Dendritic cell treated with granulocyte-macrophage colony-stimulating factor and Interleukin-4, amounts not matched to agents 40 ng/mL and 50 ng/mL, for 4 days (primary cell): ENCODE measurements at regions of chr3 and their contacts with region 1.

Region 1: DNA sequence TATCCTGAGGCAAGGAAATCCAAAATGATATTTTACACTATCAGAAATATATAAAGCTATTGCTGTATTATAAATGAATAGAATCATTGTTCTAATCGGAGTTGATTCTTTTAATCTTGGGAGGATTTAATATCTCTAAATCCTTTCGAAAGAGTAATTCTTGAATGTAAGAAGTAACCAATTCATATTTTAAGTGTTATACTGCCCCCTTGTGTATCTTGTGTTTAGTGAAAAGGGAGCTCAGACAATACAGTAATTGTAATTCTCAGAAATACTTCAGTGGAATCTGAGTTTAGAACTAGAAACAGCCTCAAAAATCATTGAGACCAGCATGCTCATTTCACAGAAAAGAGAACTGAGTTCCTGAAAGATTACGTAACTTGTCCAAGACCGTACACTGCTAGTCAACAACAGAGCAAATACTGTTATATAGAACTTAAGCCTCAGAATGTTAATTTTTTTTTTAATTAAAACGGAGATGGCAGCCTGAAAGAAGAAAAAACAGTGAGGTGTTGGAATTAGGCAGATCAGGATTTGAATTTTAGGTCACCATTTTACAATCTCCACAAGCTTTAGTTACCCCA is 42.9 kb downstream of the PLCH1 start:
- H3K4me3 Mint-ChIP-seq: no peak overlapping the region
- H3K27ac Mint-ChIP-seq: no peak overlapping the region
- H3K4me1 Mint-ChIP-seq: peaks cover 10% of the 10 kb centered on the region
- H3K27me3 Mint-ChIP-seq: no peaks in the 10 kb centered on the region

Region 2: GRCh38 chr3:154334973-154335420 is 1367.0 kb before region 1 on chr3:
- intact Hi-C with region 1: loop called (anchors 2 kb)
- H3K4me3 Mint-ChIP-seq: no peak overlapping the region
- H3K27ac Mint-ChIP-seq: no peak overlapping the region
- H3K4me1 Mint-ChIP-seq: no peaks in the 10 kb centered on the region
- H3K27me3 Mint-ChIP-seq: peaks cover 3% of the 10 kb centered on the region

Region 3: GRCh38 chr3:154758109-154758868 is 943.7 kb before region 1 on chr3:
- intact Hi-C with region 1: loop called (anchors 2 kb)
- H3K4me3 Mint-ChIP-seq: no peak overlapping the region
- H3K27ac Mint-ChIP-seq: no peak overlapping the region
- H3K4me1 Mint-ChIP-seq: no peaks in the 10 kb centered on the region
- H3K27me3 Mint-ChIP-seq: no peaks in the 10 kb centered on the region

Region 4: DNA sequence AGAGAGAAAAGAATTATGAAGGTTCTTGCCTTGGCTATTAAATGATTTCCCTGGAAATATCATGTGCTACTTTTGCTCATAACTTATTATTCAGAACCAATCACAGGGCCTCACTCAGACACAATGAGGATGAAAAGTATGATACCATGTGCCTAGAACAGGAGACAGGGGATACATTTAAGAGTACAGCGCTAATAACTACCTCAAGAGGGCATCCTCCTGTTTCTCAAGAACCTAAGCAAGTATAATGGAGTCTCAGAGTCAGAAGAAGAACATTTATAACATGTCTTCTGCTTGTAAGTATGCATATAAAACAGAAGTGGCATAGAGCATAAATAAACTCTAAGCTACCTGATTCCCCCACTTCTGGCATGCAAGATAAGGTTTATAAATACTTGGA is 747.2 kb before region 1 on chr3:
- intact Hi-C with region 1: loop called (anchors 10 kb)
- H3K4me3 Mint-ChIP-seq: no peak overlapping the region
- H3K27ac Mint-ChIP-seq: no peak overlapping the region
- H3K4me1 Mint-ChIP-seq: no peaks in the 10 kb centered on the region
- H3K27me3 Mint-ChIP-seq: no peaks in the 10 kb centered on the region

Region 5: DNA sequence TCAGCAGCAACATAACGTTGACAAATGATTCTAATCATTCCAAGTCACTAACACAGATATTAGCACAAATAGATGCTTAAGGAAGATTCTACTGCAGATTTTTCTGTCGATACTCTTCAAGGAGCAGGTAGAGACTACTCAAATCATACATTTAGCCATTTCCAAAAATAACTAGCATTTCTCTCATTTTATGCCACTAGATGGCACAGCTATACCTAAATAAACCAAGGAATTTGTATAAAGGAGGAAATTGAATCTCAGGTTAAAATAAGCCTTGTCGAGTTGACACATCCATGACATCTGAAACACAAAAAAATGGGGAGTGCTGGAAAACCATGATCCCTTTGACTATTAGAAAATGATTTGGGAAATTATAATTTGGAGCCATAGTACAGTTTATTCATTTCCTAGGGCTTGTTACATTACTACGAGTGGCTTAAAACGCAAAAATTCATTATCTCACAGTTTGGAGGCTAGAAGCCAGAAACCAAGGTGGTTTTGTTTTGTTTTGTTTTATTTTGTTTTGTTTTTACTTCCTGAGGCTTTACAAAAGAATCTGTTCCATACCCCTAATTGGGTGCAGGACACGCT is 349.0 kb before region 1 on chr3:
- intact Hi-C with region 1: loop called (anchors 1 kb)
- H3K4me3 Mint-ChIP-seq: no peak overlapping the region
- H3K27ac Mint-ChIP-seq: no peak overlapping the region
- H3K4me1 Mint-ChIP-seq: no peaks in the 10 kb centered on the region
- H3K27me3 Mint-ChIP-seq: no peaks in the 10 kb centered on the region

Region 6: GRCh38 chr3:155382396-155383042 is 319.5 kb before region 1 on chr3:
- intact Hi-C with region 1: loop called (anchors 1 kb)
- H3K4me3 Mint-ChIP-seq: no peak overlapping the region
- H3K27ac Mint-ChIP-seq: no peak overlapping the region
- H3K4me1 Mint-ChIP-seq: peaks cover 9% of the 10 kb centered on the region
- H3K27me3 Mint-ChIP-seq: peaks cover 1% of the 10 kb centered on the region

Region 7: DNA sequence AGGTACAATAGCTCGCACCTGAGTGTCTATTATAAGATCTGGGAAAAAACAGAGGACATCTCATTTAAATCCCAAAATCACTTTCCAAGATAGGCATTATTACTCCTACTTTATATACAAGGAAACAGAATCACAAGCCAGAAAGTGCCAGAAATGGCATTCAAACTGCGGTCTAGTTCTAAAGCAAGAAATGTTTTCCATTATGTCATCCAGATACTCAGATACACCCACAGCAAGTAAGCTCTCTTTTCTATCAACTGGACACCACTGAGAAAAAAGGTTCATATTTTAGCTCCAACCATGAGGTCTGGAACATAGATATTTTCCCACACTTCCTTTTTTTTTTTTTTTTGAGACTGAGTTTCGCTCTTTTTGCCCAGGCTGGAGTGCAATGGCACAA is 144.1 kb after region 1 on chr3:
- intact Hi-C with region 1: no loop called
- H3K4me3 Mint-ChIP-seq: no peak overlapping the region
- H3K27ac Mint-ChIP-seq: no peak overlapping the region
- H3K4me1 Mint-ChIP-seq: peaks cover 35% of the 10 kb centered on the region
- H3K27me3 Mint-ChIP-seq: no peaks in the 10 kb centered on the region